CD8-positive, alpha-beta T cell (primary cell): ENCODE measurements at regions of chr7 and their contacts with region 1.

Region 1: DNA sequence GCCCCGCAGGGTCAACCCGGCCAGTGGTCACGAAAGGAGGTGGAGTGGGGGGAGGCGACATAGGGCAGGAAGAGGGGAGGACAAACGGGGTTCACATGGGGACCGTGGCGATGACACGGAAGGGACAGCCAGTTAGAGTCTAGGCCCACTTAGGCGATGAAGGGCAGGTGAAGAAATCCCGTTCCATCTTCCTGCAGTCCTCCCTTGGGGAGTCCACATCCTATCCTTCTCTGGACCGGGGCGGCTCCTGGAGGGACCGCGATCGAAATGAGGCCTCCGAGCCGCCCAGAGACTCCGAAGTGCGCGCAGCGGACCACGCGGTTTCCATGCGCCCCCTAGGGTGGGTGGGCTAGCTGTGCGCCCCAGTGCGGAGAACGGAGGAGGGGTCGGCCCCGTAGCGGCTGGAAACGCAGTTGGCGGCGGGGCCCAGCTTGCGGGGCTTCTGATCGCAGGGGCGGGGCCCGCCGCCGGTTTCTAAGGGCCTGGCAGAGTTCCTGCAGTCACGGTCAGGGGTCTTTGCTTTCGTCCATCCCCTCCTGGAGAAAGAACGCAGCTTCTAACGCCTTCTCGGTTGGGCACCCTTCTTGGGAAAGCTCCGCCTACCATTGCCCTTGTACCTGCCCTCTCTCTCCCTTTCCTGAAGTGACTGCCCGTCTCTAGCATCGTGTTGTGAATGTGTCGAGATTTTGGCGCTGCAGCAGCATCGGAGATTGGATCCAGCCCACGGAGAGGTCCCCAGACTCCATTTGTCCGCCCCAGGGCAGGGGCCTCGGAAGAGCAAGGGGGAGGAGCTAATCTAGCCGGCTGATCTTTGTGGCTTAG is 17.9 kb upstream of the TMEM225B start:
- DNase-seq: peak; percentile 24 to 79 (median 69)
- ATAC-seq: peak; percentile 91
- H3K4me3 ChIP-seq: peak overlapping the region; percentile 63 to 84
- H3K4me3 Mint-ChIP-seq: peak overlapping the region; percentile 93
- H3K27ac ChIP-seq: peak overlapping the region; percentile 4 to 42
- H3K27ac Mint-ChIP-seq: peak overlapping the region; percentile 87
- H3K4me1 ChIP-seq: no peaks in the 10 kb centered on the region
- H3K4me1 Mint-ChIP-seq: peaks cover 18% of the 10 kb centered on the region
- H3K27me3 ChIP-seq: no peaks in the 10 kb centered on the region
- H3K27me3 Mint-ChIP-seq: no peaks in the 10 kb centered on the region
- CTCF ChIP-seq: peak; percentile 54

Region 2: DNA sequence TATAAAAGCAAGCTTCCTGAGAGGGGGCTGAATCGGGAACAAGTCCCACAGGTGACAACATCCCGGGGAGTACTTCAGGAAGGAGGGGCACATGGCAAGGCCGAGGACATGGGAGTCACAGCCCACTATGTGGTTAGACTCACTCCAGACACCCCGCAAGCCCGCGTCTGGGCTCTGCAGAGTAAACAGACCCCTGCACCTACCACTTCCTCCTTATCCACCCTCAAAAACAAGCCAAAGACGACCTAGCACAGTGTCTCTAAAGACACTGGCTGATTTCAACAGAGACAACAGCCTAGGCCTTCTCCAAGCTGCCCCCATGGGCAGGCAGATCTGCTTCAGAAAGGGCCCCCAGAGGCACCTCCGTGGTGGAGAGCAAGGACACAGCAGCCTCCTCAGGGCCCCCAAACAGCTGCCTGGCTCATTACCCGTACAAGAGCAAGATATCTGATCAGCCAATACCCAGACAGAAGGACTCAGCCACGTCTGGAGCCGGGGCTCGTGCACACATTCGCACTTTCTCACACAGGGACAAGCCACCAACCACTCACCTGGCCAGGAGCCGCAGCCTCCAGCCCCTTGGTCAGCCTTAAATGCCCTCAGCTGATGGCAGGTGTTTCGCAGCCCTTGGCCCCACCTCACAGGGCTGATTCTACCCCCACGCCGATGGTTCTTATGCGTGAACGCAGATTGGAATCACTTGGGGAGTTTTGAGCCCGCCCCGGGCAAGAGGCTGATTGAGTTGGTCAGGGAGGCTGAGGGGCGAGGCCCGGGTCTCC is 361.6 kb before region 1 on chr7:
- CTCF ChIA-PET with region 1: no interaction called
- POLR2A ChIA-PET with region 1: no interaction called
- intact Hi-C with region 1: no loop called
- DNase-seq: peak in 8 of 9 experiments; percentile 4 to 69 (median 18)
- ATAC-seq: peak; percentile 82
- H3K4me3 ChIP-seq: no peak overlapping the region
- H3K4me3 Mint-ChIP-seq: peak overlapping the region; percentile 38
- H3K27ac ChIP-seq: peak overlapping the region in 1 of 2 experiments; percentile 25
- H3K27ac Mint-ChIP-seq: peak overlapping the region; percentile 97
- H3K4me1 ChIP-seq: peaks cover 15% of the 10 kb centered on the region
- H3K4me1 Mint-ChIP-seq: peaks cover 20% of the 10 kb centered on the region
- H3K27me3 ChIP-seq: no peaks in the 10 kb centered on the region
- H3K27me3 Mint-ChIP-seq: no peaks in the 10 kb centered on the region
- CTCF ChIP-seq: no peak

Region 3: GRCh38 chr7:99624484-99624883 is 44.3 kb after region 1 on chr7:
- CTCF ChIA-PET with region 1: interaction called, 5 read pairs
- POLR2A ChIA-PET with region 1: interaction called, 5 read pairs
- intact Hi-C with region 1: loop called in 1 of 2 experiments (anchors 2 kb)
- DNase-seq: peak; percentile 57 to 96 (median 78)
- ATAC-seq: peak; percentile 92
- H3K4me3 ChIP-seq: peak overlapping the region; percentile 33 to 51
- H3K4me3 Mint-ChIP-seq: peak overlapping the region; percentile 90
- H3K27ac ChIP-seq: peak overlapping the region; percentile 71 to 87
- H3K27ac Mint-ChIP-seq: peak overlapping the region; percentile 99
- H3K4me1 ChIP-seq: peaks cover 36% of the 10 kb centered on the region
- H3K4me1 Mint-ChIP-seq: peaks cover 60% of the 10 kb centered on the region
- H3K27me3 ChIP-seq: no peaks in the 10 kb centered on the region
- H3K27me3 Mint-ChIP-seq: no peaks in the 10 kb centered on the region
- CTCF ChIP-seq: no peak

Region 4: GRCh38 chr7:99975782-99976521 is 395.8 kb after region 1 on chr7 and contains the start of gene AZGP1:
- CTCF ChIA-PET with region 1: no interaction called
- POLR2A ChIA-PET with region 1: no interaction called
- intact Hi-C with region 1: no loop called
- DNase-seq: no peak
- ATAC-seq: no peak
- H3K4me3 ChIP-seq: no peak within 1 kb of the TSS
- H3K4me3 Mint-ChIP-seq: no peak within 1 kb of the TSS
- H3K27ac ChIP-seq: no peak within 1 kb of the TSS
- H3K27ac Mint-ChIP-seq: no peak within 1 kb of the TSS
- H3K4me1 ChIP-seq: no peaks in the 10 kb centered on the region
- H3K4me1 Mint-ChIP-seq: peaks cover 6% of the 10 kb centered on the region
- H3K27me3 ChIP-seq: no peaks in the 10 kb centered on the region
- H3K27me3 Mint-ChIP-seq: peaks cover 4% of the 10 kb centered on the region
- CTCF ChIP-seq: no peak
- total RNA-seq, gene AZGP1: not detected

Region 5: DNA sequence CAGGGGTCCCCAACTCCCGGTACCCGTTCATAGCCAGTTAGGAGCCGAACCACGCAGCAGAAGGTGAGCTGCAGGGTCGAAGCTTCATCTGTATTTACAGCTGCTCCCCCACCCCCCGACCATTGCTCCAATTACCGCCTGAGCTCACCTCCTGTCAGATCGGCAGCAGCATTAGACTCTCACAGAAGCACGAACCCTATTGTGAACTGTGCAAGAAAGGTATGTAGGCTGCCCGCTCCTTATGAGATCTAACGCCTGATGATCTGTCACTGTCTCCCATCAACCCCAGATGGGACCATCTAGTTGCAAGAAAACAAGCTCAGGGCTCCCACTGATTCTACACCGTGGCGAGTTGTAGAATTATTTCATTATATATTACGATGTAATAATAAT is 410.3 kb after region 1 on chr7:
- CTCF ChIA-PET with region 1: no interaction called
- POLR2A ChIA-PET with region 1: no interaction called
- intact Hi-C with region 1: no loop called
- DNase-seq: no peak
- ATAC-seq: no peak
- H3K4me3 ChIP-seq: no peak overlapping the region
- H3K4me3 Mint-ChIP-seq: no peak overlapping the region
- H3K27ac ChIP-seq: no peak overlapping the region
- H3K27ac Mint-ChIP-seq: no peak overlapping the region
- H3K4me1 ChIP-seq: no peaks in the 10 kb centered on the region
- H3K4me1 Mint-ChIP-seq: peaks cover 3% of the 10 kb centered on the region
- H3K27me3 ChIP-seq: no peaks in the 10 kb centered on the region
- H3K27me3 Mint-ChIP-seq: peaks cover 4% of the 10 kb centered on the region
- CTCF ChIP-seq: no peak

Region 6: GRCh38 chr7:100215895-100216294 is 635.7 kb after region 1 on chr7:
- CTCF ChIA-PET with region 1: no interaction called
- POLR2A ChIA-PET with region 1: no interaction called
- intact Hi-C with region 1: no loop called
- DNase-seq: no peak
- ATAC-seq: no peak
- H3K4me3 ChIP-seq: no peak overlapping the region
- H3K4me3 Mint-ChIP-seq: no peak overlapping the region
- H3K27ac ChIP-seq: no peak overlapping the region
- H3K27ac Mint-ChIP-seq: no peak overlapping the region
- H3K4me1 ChIP-seq: peaks cover 61% of the 10 kb centered on the region
- H3K4me1 Mint-ChIP-seq: peaks cover 58% of the 10 kb centered on the region
- H3K27me3 ChIP-seq: no peaks in the 10 kb centered on the region
- H3K27me3 Mint-ChIP-seq: no peaks in the 10 kb centered on the region
- CTCF ChIP-seq: no peak